ENCODE measurements at regions of chr10 and their contacts with region 1.

Region 1: GRCh38 chr10:88091490-88092105 is 228.2 kb downstream of the PTEN start:
- DNase-seq: peak; percentile 91
- H3K4me3 Mint-ChIP-seq: no peak overlapping the region
- H3K27ac Mint-ChIP-seq: no peak overlapping the region
- H3K4me1 Mint-ChIP-seq: peaks cover 34% of the 10 kb centered on the region
- H3K27me3 Mint-ChIP-seq: peaks cover 19% of the 10 kb centered on the region

Region 2: GRCh38 chr10:87605628-87606308 is 485.8 kb before region 1 on chr10:
- CTCF ChIA-PET with region 1: no interaction called
- intact Hi-C with region 1: no loop called
- DNase-seq: no peak
- H3K4me3 Mint-ChIP-seq: no peak overlapping the region
- H3K27ac Mint-ChIP-seq: no peak overlapping the region
- H3K4me1 Mint-ChIP-seq: peaks cover 8% of the 10 kb centered on the region
- H3K27me3 Mint-ChIP-seq: peaks cover 2% of the 10 kb centered on the region

Region 3: DNA sequence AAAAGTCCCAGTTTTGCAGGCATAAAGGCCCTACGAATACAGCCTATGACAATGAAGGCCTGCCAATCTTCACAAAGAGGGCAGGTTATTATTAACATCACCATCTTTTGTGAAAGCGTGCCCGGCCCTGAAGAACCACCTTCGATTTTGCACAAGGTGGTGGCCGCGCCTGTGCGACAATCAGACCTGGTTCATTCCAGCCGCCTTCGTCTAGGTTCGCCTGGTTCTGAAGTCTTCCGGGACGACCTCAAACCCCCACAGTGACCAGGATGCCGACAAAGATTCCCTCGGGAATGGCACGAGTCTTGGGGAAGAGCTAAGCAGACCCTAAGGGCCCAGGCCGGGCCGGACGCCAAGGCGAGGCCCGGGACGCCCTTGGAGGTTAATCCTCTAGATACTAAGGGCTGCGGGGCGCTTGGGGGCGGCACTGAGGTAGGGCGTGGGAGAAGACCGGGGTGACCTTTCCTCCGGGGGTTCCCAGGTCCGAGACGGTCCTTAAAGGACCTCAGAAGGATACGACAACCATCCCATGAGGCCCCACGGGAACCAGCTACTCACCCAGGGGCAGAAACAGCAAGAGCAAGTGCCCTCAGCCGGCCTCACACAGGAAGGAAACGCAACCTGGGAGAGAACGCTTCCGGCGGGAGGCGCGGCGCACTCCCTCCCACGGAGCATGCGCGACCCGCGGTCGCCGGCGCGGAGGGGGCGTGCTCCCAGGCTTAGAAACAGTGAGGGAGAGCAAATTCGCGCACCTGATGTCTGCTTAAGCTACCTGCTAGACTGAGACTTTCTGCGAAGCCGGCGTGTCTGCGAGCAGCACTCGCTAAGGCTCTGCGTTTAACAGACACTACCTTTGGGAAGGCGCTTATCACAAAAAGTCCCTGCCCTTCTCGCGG is 273.7 kb before region 1 on chr10 and contains the start of gene ATAD1:
- CTCF ChIA-PET with region 1: no interaction called
- intact Hi-C with region 1: loop called (anchors 1 kb)
- DNase-seq: peak; percentile 90
- H3K4me3 Mint-ChIP-seq: peak within 1 kb of the TSS; percentile 87
- H3K27ac Mint-ChIP-seq: peak within 1 kb of the TSS; percentile 94
- H3K4me1 Mint-ChIP-seq: peaks cover 28% of the 10 kb centered on the region
- H3K27me3 Mint-ChIP-seq: no peaks in the 10 kb centered on the region
- total RNA-seq, gene ATAD1: 47.4 to 53.7 TPM

Region 4: DNA sequence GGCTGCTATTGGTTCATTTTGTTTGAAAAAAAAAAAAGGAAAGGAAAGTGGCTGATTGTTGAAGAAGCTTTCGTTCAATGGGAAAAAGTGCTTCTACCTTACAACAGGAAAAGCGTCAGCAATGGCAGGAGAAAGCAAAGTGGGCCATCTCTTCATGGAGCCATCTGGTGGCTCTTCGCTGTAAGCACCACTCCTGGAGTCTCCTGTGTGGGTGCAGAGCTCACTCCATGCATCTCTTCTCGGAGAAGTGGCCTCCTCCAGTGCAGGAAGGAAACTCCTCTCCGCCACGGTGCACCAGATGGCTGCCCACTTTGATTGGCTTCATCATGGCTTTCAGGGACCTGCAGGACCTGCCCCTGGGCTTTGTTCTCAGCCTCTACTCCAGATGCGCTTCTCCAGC is 22.8 kb after region 1 on chr10:
- CTCF ChIA-PET with region 1: interaction called, 7 read pairs
- intact Hi-C with region 1: loop called (anchors 1 kb)
- DNase-seq: peak; percentile 45
- H3K4me3 Mint-ChIP-seq: no peak overlapping the region
- H3K27ac Mint-ChIP-seq: no peak overlapping the region
- H3K4me1 Mint-ChIP-seq: peaks cover 8% of the 10 kb centered on the region
- H3K27me3 Mint-ChIP-seq: peaks cover 10% of the 10 kb centered on the region

Region 5: GRCh38 chr10:88270871-88271713 is 179.5 kb after region 1 on chr10:
- CTCF ChIA-PET with region 1: interaction called, 3 read pairs
- intact Hi-C with region 1: loop called (anchors 1 kb)
- DNase-seq: peak; percentile 43
- H3K4me3 Mint-ChIP-seq: no peak overlapping the region
- H3K27ac Mint-ChIP-seq: peak overlapping the region; percentile 4
- H3K4me1 Mint-ChIP-seq: peaks cover 30% of the 10 kb centered on the region
- H3K27me3 Mint-ChIP-seq: peaks cover 3% of the 10 kb centered on the region

Region 6: GRCh38 chr10:88759366-88760101 is 667.9 kb after region 1 on chr10 and contains the start of gene LIPN:
- CTCF ChIA-PET with region 1: no interaction called
- intact Hi-C with region 1: loop called (anchors 1 kb)
- DNase-seq: no peak
- H3K4me3 Mint-ChIP-seq: no peak within 1 kb of the TSS
- H3K27ac Mint-ChIP-seq: no peak within 1 kb of the TSS
- H3K4me1 Mint-ChIP-seq: peaks cover 13% of the 10 kb centered on the region
- H3K27me3 Mint-ChIP-seq: peaks cover 5% of the 10 kb centered on the region
- total RNA-seq, gene LIPN: not detected

Region 7: GRCh38 chr10:89163265-89163995 is 1071.8 kb after region 1 on chr10:
- CTCF ChIA-PET with region 1: no interaction called
- intact Hi-C with region 1: loop called (anchors 5 kb)
- DNase-seq: peak; percentile 69
- H3K4me3 Mint-ChIP-seq: peak overlapping the region; percentile 33
- H3K27ac Mint-ChIP-seq: peak overlapping the region; percentile 5
- H3K4me1 Mint-ChIP-seq: peaks cover 36% of the 10 kb centered on the region
- H3K27me3 Mint-ChIP-seq: peaks cover 7% of the 10 kb centered on the region